ENCODE measurements at regions of chr11 and their contacts with region 1.

Region 1: DNA sequence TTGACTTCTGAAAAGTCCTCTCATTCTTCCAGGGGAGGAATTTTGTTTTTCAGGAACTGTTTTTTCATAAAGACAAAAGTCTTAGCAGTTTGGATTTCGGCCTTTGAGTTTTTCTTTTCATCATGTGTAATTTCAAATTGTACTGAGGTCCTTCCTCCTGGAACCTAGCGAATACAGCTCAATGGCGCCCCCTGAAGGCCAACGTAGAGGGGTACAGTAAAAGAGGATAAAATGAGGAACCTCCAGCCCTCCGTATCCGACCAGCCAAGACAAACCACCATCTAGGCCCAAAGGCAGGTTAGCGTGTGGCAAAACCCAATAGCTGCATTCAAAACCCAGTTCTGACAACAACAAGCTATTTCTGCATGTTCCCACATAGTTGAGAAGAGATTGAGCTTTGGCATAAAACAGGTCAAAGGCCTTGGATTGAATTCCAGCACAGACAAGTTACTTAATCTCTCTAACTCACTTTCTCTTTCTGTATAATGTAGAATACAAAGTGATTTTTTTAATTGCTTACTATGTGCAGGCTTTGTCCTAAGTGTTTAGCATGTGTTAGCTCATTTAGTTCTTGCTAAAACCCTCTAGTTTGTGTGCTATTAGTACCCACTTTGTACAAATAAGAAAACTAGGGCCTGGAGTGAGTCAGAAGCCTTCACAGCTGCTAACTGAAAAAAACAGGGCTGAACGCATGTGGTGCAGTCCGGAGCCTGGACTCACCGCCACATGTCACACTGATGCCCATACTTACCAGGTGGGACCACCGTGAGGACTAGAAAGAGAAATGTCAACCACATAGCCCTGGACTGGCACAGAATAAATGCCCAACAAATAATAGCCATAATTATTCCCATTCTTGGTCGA is 43.2 kb upstream of the ETS1 start:
- DNase-seq: peak; percentile 71 to 97 (median 89)
- ATAC-seq: peak; percentile 73 to 84 (median 78)
- H3K4me3 ChIP-seq: no peak overlapping the region
- H3K4me3 Mint-ChIP-seq: peak overlapping the region; percentile 46 to 70 (median 53)
- H3K27ac ChIP-seq: peak overlapping the region; percentile 78
- H3K27ac Mint-ChIP-seq: peak overlapping the region; percentile 99 to 100
- H3K4me1 ChIP-seq: peaks cover 53 to 57% of the 10 kb centered on the region in 2 experiments
- H3K4me1 Mint-ChIP-seq: peaks cover 65 to 71% (median 68%) of the 10 kb centered on the region in 3 donors
- H3K27me3 ChIP-seq: no peaks in the 10 kb centered on the region
- H3K27me3 Mint-ChIP-seq: no peaks in the 10 kb centered on the region

Region 2: GRCh38 chr11:128172046-128172878 is 458.3 kb before region 1 on chr11:
- CTCF ChIA-PET with region 1: interaction called, 39 to 101 read pairs
- POLR2A ChIA-PET with region 1: interaction called in 1 of 2 experiments, 3 read pairs
- DNase-seq: peak; percentile 60 to 93 (median 81)
- ATAC-seq: peak; percentile 50 to 78 (median 72)
- H3K4me3 ChIP-seq: no peak overlapping the region
- H3K4me3 Mint-ChIP-seq: no peak overlapping the region
- H3K27ac ChIP-seq: no peak overlapping the region
- H3K27ac Mint-ChIP-seq: no peak overlapping the region
- H3K4me1 ChIP-seq: no peaks in the 10 kb centered on the region
- H3K4me1 Mint-ChIP-seq: peaks cover 0 to 5% (median 3%) of the 10 kb centered on the region in 3 donors
- H3K27me3 ChIP-seq: no peaks in the 10 kb centered on the region
- H3K27me3 Mint-ChIP-seq: no peaks in the 10 kb centered on the region

Region 3: GRCh38 chr11:128302425-128303186 is 328.0 kb before region 1 on chr11:
- CTCF ChIA-PET with region 1: interaction called, 5 to 12 read pairs
- POLR2A ChIA-PET with region 1: interaction called, 6 to 10 read pairs
- DNase-seq: peak in 34 of 35 experiments; percentile 47 to 94 (median 74)
- ATAC-seq: peak; percentile 85 to 90 (median 88)
- H3K4me3 ChIP-seq: peak overlapping the region; percentile 56 to 60
- H3K4me3 Mint-ChIP-seq: peak overlapping the region; percentile 83 to 91 (median 84)
- H3K27ac ChIP-seq: peak overlapping the region; percentile 99
- H3K27ac Mint-ChIP-seq: peak overlapping the region; percentile 98
- H3K4me1 ChIP-seq: peaks cover 72 to 80% of the 10 kb centered on the region in 2 experiments
- H3K4me1 Mint-ChIP-seq: peaks cover 90 to 97% (median 95%) of the 10 kb centered on the region in 3 donors
- H3K27me3 ChIP-seq: no peaks in the 10 kb centered on the region
- H3K27me3 Mint-ChIP-seq: no peaks in the 10 kb centered on the region

Region 4: GRCh38 chr11:128482512-128483191 is 147.9 kb before region 1 on chr11:
- CTCF ChIA-PET with region 1: interaction called, 6 to 12 read pairs
- POLR2A ChIA-PET with region 1: interaction called, 3 read pairs
- DNase-seq: peak in 30 of 35 experiments; percentile 38 to 85 (median 69)
- ATAC-seq: peak; percentile 66 to 75 (median 72)
- H3K4me3 ChIP-seq: peak overlapping the region in 1 of 2 donors; percentile 17
- H3K4me3 Mint-ChIP-seq: peak overlapping the region; percentile 63 to 99 (median 77)
- H3K27ac ChIP-seq: peak overlapping the region; percentile 96
- H3K27ac Mint-ChIP-seq: peak overlapping the region; percentile 98
- H3K4me1 ChIP-seq: peaks cover 76 to 84% of the 10 kb centered on the region in 2 experiments
- H3K4me1 Mint-ChIP-seq: peaks cover 96 to 100% (median 97%) of the 10 kb centered on the region in 3 donors
- H3K27me3 ChIP-seq: no peaks in the 10 kb centered on the region
- H3K27me3 Mint-ChIP-seq: no peaks in the 10 kb centered on the region

Region 5: GRCh38 chr11:128530118-128531074 is 100.2 kb before region 1 on chr11:
- CTCF ChIA-PET with region 1: interaction called, 3 to 24 read pairs
- POLR2A ChIA-PET with region 1: interaction called in 1 of 2 experiments, 23 read pairs
- DNase-seq: no peak
- ATAC-seq: no peak
- H3K4me3 ChIP-seq: no peak overlapping the region
- H3K4me3 Mint-ChIP-seq: no peak overlapping the region
- H3K27ac ChIP-seq: no peak overlapping the region
- H3K27ac Mint-ChIP-seq: peak overlapping the region; percentile 2 to 54
- H3K4me1 ChIP-seq: peaks cover 28 to 32% of the 10 kb centered on the region in 2 experiments
- H3K4me1 Mint-ChIP-seq: peaks cover 70 to 74% (median 73%) of the 10 kb centered on the region in 3 donors
- H3K27me3 ChIP-seq: no peaks in the 10 kb centered on the region
- H3K27me3 Mint-ChIP-seq: no peaks in the 10 kb centered on the region

Region 6: DNA sequence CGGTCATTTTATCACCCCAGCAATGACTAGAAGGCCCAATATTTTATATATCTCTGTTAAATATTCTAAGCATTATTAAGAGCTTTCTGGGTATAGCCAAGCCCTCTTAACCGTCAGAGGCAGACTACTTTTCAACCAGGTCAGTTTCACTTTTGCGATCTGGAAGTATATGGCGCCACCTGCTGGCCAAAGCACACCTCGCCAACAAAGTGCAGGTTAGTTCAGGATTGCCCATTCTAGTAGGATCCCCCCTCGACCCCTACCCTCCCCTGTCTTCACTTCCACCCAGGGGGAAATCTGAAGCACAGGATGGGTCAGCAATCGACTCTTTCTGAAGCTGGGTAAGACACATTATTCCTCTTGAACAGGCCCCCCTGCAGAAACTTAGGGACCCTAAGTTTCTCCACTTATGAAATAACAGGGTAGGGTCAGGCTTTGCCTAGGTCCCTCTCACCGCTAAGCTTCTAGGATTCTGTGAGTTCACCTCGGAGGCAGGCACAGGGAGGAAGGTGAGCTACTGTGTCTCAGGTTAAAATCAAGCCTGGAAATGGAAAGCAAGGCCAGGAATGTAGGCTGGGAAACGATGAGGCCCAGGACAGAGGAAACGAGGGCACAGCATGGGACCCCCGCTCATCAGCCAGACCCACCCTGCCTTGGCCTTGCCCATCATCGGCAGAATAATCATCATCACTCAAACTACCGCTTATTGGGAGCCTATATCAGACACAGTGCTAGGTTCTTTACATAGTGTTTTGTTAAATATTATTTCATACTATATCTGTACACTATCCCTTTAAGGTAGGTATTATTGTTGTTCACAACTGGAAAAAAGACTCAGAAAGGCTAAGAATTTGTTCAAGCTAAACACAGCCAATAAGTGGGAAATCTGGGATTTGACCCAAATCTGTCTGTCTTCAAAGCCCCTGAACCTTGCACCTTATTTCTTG is 200.8 kb after region 1 on chr11:
- CTCF ChIA-PET with region 1: interaction called, 4 to 43 read pairs
- POLR2A ChIA-PET with region 1: no interaction called
- DNase-seq: peak; percentile 61 to 94 (median 82)
- ATAC-seq: peak; percentile 72 to 86 (median 86)
- H3K4me3 ChIP-seq: peak overlapping the region in 1 of 2 donors; percentile 33
- H3K4me3 Mint-ChIP-seq: peak overlapping the region; percentile 57 to 76 (median 67)
- H3K27ac ChIP-seq: peak overlapping the region; percentile 93
- H3K27ac Mint-ChIP-seq: peak overlapping the region; percentile 91 to 92
- H3K4me1 ChIP-seq: peaks cover 6 to 18% of the 10 kb centered on the region in 2 experiments
- H3K4me1 Mint-ChIP-seq: peaks cover 23 to 34% (median 25%) of the 10 kb centered on the region in 3 donors
- H3K27me3 ChIP-seq: no peaks in the 10 kb centered on the region
- H3K27me3 Mint-ChIP-seq: no peaks in the 10 kb centered on the region

Measured in T-cell (primary cell).